ENCODE measurements at regions of chr10 and their contacts with region 1.

Region 1: DNA sequence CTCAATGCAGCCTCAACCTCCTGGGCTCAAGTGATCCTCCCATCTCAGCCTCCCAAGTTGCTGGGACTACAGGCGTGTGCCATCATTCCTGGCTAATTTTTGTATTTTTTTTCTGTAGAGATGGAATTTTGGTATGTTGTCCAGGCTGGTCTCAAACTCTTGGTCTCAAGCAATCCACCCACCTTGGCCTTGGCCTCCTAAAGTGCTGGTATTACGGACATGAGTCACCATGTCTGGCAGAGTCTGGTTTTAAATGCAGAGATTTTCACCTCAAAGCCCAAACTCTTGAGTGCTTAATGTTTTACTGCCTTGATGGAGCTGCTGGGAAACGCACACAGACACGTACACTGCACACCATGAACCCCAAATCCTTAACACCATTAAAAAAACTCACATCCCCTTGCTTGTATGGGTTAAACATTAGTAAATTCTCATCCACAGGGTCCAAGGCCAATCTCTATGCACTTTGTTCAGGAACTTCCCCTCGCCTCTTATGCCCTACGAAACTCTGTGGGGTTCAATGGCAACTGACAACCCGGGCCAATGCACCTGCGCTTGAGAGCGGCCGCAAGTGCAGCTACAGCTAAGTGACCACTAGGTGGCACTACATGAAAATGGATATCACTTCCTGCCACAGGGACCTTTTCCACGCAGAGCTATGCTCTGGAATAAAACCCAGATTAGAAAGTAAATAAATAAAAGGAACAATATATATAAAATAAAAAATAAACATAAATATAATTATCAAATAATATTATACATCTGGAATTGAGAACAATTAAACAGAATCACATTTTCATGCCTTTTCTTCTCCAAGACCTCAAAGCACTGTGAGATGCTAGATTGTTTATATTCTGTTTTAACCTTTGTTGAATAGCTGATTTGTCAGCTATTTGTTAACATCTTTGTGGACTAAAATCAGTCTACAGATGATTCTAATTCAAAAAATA is 66.9 kb upstream of the AFAP1L2 start:
- DNase-seq: peak; percentile 73
- H3K4me3 Mint-ChIP-seq: no peak overlapping the region
- H3K27ac Mint-ChIP-seq: no peak overlapping the region
- H3K4me1 Mint-ChIP-seq: peaks cover 10% of the 10 kb centered on the region
- H3K27me3 Mint-ChIP-seq: no peaks in the 10 kb centered on the region

Region 2: DNA sequence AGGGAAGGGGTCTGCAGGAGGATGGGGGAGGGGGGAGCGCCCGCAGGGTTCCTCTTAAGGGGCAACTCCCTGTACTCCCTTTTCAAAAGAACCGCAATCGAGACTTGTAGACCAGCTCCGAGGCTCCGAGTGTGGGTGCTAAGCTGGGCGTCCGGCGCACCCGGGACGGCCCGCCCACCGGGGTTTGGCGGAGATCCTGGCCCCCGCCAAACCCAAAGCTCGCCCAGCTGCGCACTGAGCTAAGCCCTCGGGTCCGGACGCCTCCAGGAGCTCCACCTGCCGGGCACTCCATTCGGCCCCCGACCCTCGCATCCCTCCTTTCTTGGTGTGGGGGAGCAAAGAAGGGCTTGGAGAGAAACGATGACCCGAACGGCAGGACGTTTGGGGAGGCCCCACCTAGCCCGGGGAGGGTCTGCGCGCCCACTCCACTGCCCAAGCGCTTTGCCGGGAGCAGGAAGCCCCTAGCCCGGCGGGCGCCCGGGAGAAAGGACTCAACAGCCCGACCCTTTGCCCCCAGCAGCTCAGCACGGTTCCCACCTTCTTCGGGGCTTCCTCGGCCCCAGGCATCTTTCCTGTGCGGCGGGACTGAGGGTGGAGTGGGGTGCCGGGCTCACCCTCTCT is 67.6 kb before region 1 on chr10:
- CTCF ChIA-PET with region 1: no interaction called
- POLR2A ChIA-PET with region 1: no interaction called
- intact Hi-C with region 1: no loop called
- DNase-seq: no peak
- H3K4me3 Mint-ChIP-seq: peak overlapping the region; percentile 7
- H3K27ac Mint-ChIP-seq: no peak overlapping the region
- H3K4me1 Mint-ChIP-seq: peaks cover 12% of the 10 kb centered on the region
- H3K27me3 Mint-ChIP-seq: peaks cover 58% of the 10 kb centered on the region

Region 3: DNA sequence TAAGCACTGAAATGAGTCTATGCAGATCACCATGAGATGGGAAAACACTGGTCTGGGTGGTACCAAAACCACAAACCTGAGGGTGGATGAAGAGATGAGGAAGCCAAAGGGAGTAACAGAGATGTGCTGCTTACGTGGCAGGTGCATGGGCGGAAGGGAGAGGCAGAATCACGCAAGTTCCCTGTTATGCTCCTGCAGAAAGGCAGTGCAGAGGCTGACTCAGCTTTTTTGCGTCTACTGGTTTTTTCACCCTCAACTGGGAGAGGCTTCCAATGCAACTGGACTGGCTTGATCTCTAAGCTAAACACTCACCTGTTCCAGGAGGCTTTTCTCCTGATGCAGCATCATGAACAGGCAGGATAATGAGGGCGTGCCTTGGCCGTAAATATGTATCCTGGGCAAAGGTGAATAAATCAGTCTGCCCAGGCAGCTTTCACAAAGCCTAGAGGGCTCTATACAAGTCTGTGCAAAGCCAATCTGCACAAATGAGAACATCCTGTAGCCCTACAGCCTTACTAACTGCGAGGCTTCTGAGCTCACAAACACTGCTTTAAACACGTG is 28.5 kb after region 1 on chr10:
- CTCF ChIA-PET with region 1: interaction called, 7 read pairs
- POLR2A ChIA-PET with region 1: no interaction called
- intact Hi-C with region 1: loop called (anchors 1 kb)
- DNase-seq: peak; percentile 92
- H3K4me3 Mint-ChIP-seq: peak overlapping the region; percentile 63
- H3K27ac Mint-ChIP-seq: peak overlapping the region; percentile 89
- H3K4me1 Mint-ChIP-seq: peaks cover 89% of the 10 kb centered on the region
- H3K27me3 Mint-ChIP-seq: no peaks in the 10 kb centered on the region

Region 4: GRCh38 chr10:114550756-114551635 is 79.8 kb after region 1 on chr10:
- CTCF ChIA-PET with region 1: interaction called, 89 read pairs
- POLR2A ChIA-PET with region 1: no interaction called
- intact Hi-C with region 1: no loop called
- DNase-seq: no peak
- H3K4me3 Mint-ChIP-seq: no peak overlapping the region
- H3K27ac Mint-ChIP-seq: peak overlapping the region; percentile 15
- H3K4me1 Mint-ChIP-seq: peaks cover 16% of the 10 kb centered on the region
- H3K27me3 Mint-ChIP-seq: no peaks in the 10 kb centered on the region

Region 5: GRCh38 chr10:114703377-114704107 is 232.3 kb after region 1 on chr10:
- CTCF ChIA-PET with region 1: interaction called, 14 read pairs
- POLR2A ChIA-PET with region 1: no interaction called
- intact Hi-C with region 1: no loop called
- DNase-seq: no peak
- H3K4me3 Mint-ChIP-seq: no peak overlapping the region
- H3K27ac Mint-ChIP-seq: no peak overlapping the region
- H3K4me1 Mint-ChIP-seq: no peaks in the 10 kb centered on the region
- H3K27me3 Mint-ChIP-seq: peaks cover 7% of the 10 kb centered on the region